MCF 10A (cell line): ENCODE measurements at regions of chr2 and their contacts with region 1.

Region 1: DNA sequence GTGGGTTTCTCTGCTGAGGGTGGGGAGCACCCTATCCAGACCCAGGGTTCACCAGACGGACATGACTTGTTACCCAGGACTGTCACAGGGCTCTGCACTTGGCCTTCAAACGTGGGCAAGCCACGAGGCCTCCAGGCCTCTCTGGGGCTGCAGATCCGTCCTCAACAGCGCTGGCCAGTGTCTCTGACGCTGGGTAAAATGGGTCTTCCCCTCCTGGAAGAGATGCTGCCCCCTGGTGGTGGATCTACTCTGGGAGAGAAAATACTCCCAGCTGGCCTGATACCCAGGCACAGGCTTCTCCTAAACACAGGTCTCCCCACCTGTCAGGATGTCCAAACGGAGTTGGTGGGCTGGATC is 3.7 kb downstream of the GPR17 start:
- DNase-seq: peak; percentile 90
- H3K4me3 Mint-ChIP-seq: no peak overlapping the region
- H3K27ac Mint-ChIP-seq: no peak overlapping the region
- H3K4me1 Mint-ChIP-seq: peaks cover 4% of the 10 kb centered on the region
- H3K27me3 Mint-ChIP-seq: no peaks in the 10 kb centered on the region
- CTCF ChIP-seq: peak; percentile 59

Region 2: GRCh38 chr2:127197475-127198385 is 451.9 kb before region 1 on chr2:
- CTCF ChIA-PET with region 1: no interaction called
- POLR2A ChIA-PET with region 1: no interaction called
- intact Hi-C with region 1: loop called (anchors 5 kb)
- DNase-seq: peak; percentile 77
- H3K4me3 Mint-ChIP-seq: peak overlapping the region; percentile 9
- H3K27ac Mint-ChIP-seq: no peak overlapping the region
- H3K4me1 Mint-ChIP-seq: peaks cover 6% of the 10 kb centered on the region
- H3K27me3 Mint-ChIP-seq: no peaks in the 10 kb centered on the region
- CTCF ChIP-seq: peak; percentile 77

Region 3: GRCh38 chr2:127324635-127325034 is 325.0 kb before region 1 on chr2:
- CTCF ChIA-PET with region 1: no interaction called
- POLR2A ChIA-PET with region 1: no interaction called
- intact Hi-C with region 1: loop called (anchors 1 kb)
- DNase-seq: peak; percentile 54
- H3K4me3 Mint-ChIP-seq: no peak overlapping the region
- H3K27ac Mint-ChIP-seq: no peak overlapping the region
- H3K4me1 Mint-ChIP-seq: no peaks in the 10 kb centered on the region
- H3K27me3 Mint-ChIP-seq: no peaks in the 10 kb centered on the region
- CTCF ChIP-seq: peak; percentile 61

Region 4: GRCh38 chr2:127508631-127509034 is 141.0 kb before region 1 on chr2:
- CTCF ChIA-PET with region 1: interaction called, 3 read pairs
- POLR2A ChIA-PET with region 1: no interaction called
- intact Hi-C with region 1: loop called (anchors 5 kb)
- DNase-seq: peak; percentile 98
- H3K4me3 Mint-ChIP-seq: no peak overlapping the region
- H3K27ac Mint-ChIP-seq: peak overlapping the region; percentile 32
- H3K4me1 Mint-ChIP-seq: peaks cover 23% of the 10 kb centered on the region
- H3K27me3 Mint-ChIP-seq: no peaks in the 10 kb centered on the region
- CTCF ChIP-seq: no peak

Region 5: GRCh38 chr2:127526149-127527000 is 123.3 kb before region 1 on chr2 and contains the start of gene IWS1:
- CTCF ChIA-PET with region 1: interaction called, 4 read pairs
- POLR2A ChIA-PET with region 1: interaction called, 7 read pairs
- intact Hi-C with region 1: loop called (anchors 1 kb)
- DNase-seq: peak; percentile 97
- H3K4me3 Mint-ChIP-seq: peak within 1 kb of the TSS; percentile 79
- H3K27ac Mint-ChIP-seq: peak within 1 kb of the TSS; percentile 95
- H3K4me1 Mint-ChIP-seq: peaks cover 17% of the 10 kb centered on the region
- H3K27me3 Mint-ChIP-seq: no peaks in the 10 kb centered on the region
- CTCF ChIP-seq: no peak
- total RNA-seq, gene IWS1: 56.8 and 57.0 TPM in 2 replicates

Region 6: DNA sequence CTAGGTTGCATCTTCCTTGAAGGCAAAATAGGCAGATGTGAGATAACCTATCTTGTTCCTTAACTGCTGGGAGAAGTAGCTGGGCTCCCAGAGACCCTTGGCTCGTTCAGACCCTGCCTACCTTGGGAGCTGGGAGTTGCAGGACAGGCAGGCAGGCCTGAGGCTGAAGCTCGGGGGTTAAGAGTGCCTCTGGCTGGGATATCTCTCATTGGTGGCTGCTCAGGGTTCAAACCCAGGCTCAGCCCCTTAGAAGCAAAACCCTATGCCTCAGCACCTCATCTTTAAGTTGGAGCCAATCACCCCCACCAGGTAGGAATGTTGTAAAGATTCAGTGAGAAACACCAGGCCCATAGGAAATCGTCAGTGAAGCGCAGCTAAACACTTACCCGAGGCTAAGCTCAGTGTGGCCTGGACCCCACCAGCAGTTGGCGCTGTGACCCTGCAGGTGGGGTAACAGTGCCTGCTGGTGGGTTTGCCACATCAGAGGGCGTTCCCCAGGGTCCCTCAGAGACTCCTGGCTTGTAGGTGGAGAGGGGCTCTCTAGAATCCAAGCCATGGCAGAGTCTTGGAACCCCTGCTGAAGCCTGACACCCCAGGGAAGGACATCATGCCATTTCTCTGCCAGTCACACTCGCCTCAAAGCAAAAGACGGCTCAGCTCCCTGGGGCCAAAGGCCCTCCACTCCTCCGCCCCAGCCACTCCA is 58.3 kb before region 1 on chr2:
- CTCF ChIA-PET with region 1: interaction called, 4 read pairs
- POLR2A ChIA-PET with region 1: no interaction called
- intact Hi-C with region 1: loop called (anchors 1 kb)
- DNase-seq: peak; percentile 59
- H3K4me3 Mint-ChIP-seq: no peak overlapping the region
- H3K27ac Mint-ChIP-seq: no peak overlapping the region
- H3K4me1 Mint-ChIP-seq: no peaks in the 10 kb centered on the region
- H3K27me3 Mint-ChIP-seq: no peaks in the 10 kb centered on the region
- CTCF ChIP-seq: peak; percentile 72

Region 7: DNA sequence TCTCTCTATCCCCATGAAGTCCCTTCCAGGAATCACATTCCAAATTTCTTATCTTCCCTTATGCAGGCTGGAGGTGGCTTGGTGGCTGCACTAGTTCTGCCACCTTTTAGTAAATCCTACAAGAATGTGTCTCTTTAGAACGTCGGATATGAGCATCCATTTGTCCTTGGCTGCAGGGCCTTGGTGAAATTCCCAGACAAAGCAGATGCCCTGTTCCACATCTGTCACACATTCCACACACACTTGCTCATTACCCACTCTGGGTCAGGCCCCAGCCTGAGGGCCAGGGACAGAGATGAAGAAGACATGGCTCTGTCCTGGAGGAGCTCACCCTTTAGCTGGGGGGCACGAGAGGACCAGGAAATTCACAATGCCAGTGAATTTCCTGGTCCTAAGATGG is 34.9 kb before region 1 on chr2:
- CTCF ChIA-PET with region 1: no interaction called
- POLR2A ChIA-PET with region 1: no interaction called
- intact Hi-C with region 1: no loop called
- DNase-seq: no peak
- H3K4me3 Mint-ChIP-seq: no peak overlapping the region
- H3K27ac Mint-ChIP-seq: no peak overlapping the region
- H3K4me1 Mint-ChIP-seq: peaks cover 17% of the 10 kb centered on the region
- H3K27me3 Mint-ChIP-seq: no peaks in the 10 kb centered on the region
- CTCF ChIP-seq: no peak

Region 8: GRCh38 chr2:127675331-127676261 is 25.9 kb after region 1 on chr2 and contains the start of gene LIMS2:
- CTCF ChIA-PET with region 1: interaction called, 12 read pairs
- POLR2A ChIA-PET with region 1: no interaction called
- intact Hi-C with region 1: no loop called
- DNase-seq: no peak
- H3K4me3 Mint-ChIP-seq: peak within 1 kb of the TSS; percentile 49
- H3K27ac Mint-ChIP-seq: no peak within 1 kb of the TSS
- H3K4me1 Mint-ChIP-seq: no peaks in the 10 kb centered on the region
- H3K27me3 Mint-ChIP-seq: peaks cover 48% of the 10 kb centered on the region
- CTCF ChIP-seq: no peak
- total RNA-seq, gene LIMS2: not detected in 2 replicates

Region 9: GRCh38 chr2:127712999-127713398 is 63.3 kb after region 1 on chr2:
- CTCF ChIA-PET with region 1: no interaction called
- POLR2A ChIA-PET with region 1: no interaction called
- intact Hi-C with region 1: no loop called
- DNase-seq: no peak
- H3K4me3 Mint-ChIP-seq: no peak overlapping the region
- H3K27ac Mint-ChIP-seq: no peak overlapping the region
- H3K4me1 Mint-ChIP-seq: no peaks in the 10 kb centered on the region
- H3K27me3 Mint-ChIP-seq: no peaks in the 10 kb centered on the region
- CTCF ChIP-seq: no peak